ENCODE measurements at regions of chr9 and their contacts with region 1.

Region 1: DNA sequence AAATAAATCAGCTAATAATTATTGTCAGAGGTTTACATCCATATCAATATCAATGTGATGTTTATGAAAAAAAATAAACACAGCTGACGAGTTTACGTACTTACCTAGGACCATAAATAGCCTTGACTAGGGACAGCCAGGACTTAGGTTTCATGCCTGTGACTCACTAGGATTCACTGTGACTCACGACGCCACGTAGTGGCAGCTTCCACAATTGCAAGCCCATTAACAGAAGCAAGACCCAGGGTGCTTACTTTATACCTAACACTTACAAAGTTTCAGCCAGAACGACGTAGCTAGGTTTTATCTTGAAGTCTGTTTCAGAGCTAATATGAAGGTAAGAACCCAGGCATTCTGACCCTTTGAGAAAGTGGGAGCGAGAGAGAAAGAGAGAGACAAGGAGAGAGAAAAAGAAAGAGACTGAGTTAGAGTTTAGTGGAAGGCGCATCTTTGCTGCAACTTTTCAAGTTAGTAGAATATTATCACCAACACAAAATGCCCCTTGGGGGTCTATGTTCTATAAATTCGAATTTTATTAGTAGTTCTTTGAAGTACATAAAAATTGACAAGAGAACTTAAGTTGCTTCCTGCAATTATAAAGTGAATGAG is 191.2 kb downstream of the GNA14 start:
- DNase-seq: peak; percentile 27 to 76
- ATAC-seq: peak; percentile 75 to 91
- H3K4me3 ChIP-seq: no peak overlapping the region
- H3K27ac ChIP-seq: no peak overlapping the region
- H3K4me1 ChIP-seq: no peaks in the 10 kb centered on the region
- H3K27me3 ChIP-seq: no peaks in the 10 kb centered on the region
- CTCF ChIP-seq: peak; percentile 33 to 79 (median 74)
- POLR2A ChIP-seq: no peak

Region 2: GRCh38 chr9:77648234-77649120 is 191.5 kb after region 1 on chr9 and contains the start of gene GNA14:
- in situ Hi-C with region 1: loop called in 1 of 4 experiments (anchors 10 kb)
- intact Hi-C with region 1: loop called (anchors 1 kb)
- DNase-seq: no peak
- ATAC-seq: peak; percentile 51 to 65
- H3K4me3 ChIP-seq: peak within 1 kb of the TSS; percentile 43 to 58 (median 55)
- H3K27ac ChIP-seq: peak within 1 kb of the TSS in 3 of 4 donors; percentile 18 to 29 (median 24)
- H3K4me1 ChIP-seq: peaks cover 5 to 8% of the 10 kb centered on the region in 2 donors
- H3K27me3 ChIP-seq: peaks cover 16 to 26% (median 21%) of the 10 kb centered on the region in 3 donors
- CTCF ChIP-seq: no peak
- POLR2A ChIP-seq: no peak
- total RNA-seq, gene GNA14: 0.20 to 0.56 (median 0.22) TPM in 3 of 4 donors, not detected in the other

Region 3: DNA sequence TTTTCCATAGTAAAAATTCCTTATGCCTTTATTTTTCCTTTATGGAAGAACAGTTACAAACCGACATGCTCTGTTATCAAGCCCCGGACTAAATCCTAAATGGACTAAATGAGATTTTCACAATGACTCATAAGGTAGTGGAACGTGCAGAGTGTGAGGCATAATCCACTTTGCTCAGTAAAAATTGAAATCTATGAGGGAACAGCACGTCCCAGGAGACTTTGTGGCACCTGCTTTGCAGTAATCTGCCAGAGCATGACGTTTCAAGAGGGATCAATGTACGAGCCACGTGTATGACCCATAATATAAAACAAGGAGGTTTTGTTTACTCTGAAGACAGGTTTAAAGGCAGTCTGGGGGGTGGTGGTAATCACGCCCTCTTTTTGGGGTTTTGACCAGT is 275.0 kb after region 1 on chr9:
- in situ Hi-C with region 1: loop called in 1 of 4 experiments (anchors 25 kb)
- intact Hi-C with region 1: no loop called
- DNase-seq: peak; percentile 29 to 37
- ATAC-seq: peak; percentile 75 to 94
- H3K4me3 ChIP-seq: no peak overlapping the region
- H3K27ac ChIP-seq: peak overlapping the region; percentile 33 to 75 (median 43)
- H3K4me1 ChIP-seq: peaks cover 28 to 32% of the 10 kb centered on the region in 2 donors
- H3K27me3 ChIP-seq: no peaks in the 10 kb centered on the region
- CTCF ChIP-seq: no peak
- POLR2A ChIP-seq: peak in 1 of 2 donors; percentile 32

Region 4: GRCh38 chr9:77751341-77752091 is 294.6 kb after region 1 on chr9:
- in situ Hi-C with region 1: loop called in 1 of 4 experiments (anchors 25 kb)
- intact Hi-C with region 1: loop called (anchors 5 kb)
- DNase-seq: no peak
- ATAC-seq: peak; percentile 39 to 68
- H3K4me3 ChIP-seq: no peak overlapping the region
- H3K27ac ChIP-seq: peak overlapping the region in 1 of 4 donors; percentile 10
- H3K4me1 ChIP-seq: peaks cover 0 to 3% of the 10 kb centered on the region in 2 donors
- H3K27me3 ChIP-seq: no peaks in the 10 kb centered on the region
- CTCF ChIP-seq: peak; percentile 35 to 58 (median 48)
- POLR2A ChIP-seq: no peak

Region 5: GRCh38 chr9:77841739-77842386 is 384.9 kb after region 1 on chr9:
- in situ Hi-C with region 1: no loop called
- intact Hi-C with region 1: loop called (anchors 10 kb)
- DNase-seq: no peak
- ATAC-seq: peak in 1 of 2 donors; percentile 33
- H3K4me3 ChIP-seq: no peak overlapping the region
- H3K27ac ChIP-seq: no peak overlapping the region
- H3K4me1 ChIP-seq: peaks cover 4 to 6% of the 10 kb centered on the region in 2 donors
- H3K27me3 ChIP-seq: no peaks in the 10 kb centered on the region
- CTCF ChIP-seq: peak in 4 of 5 experiments; percentile 6 to 41 (median 21)
- POLR2A ChIP-seq: no peak

Measured in gastrocnemius medialis (tissue), 4 donors.